Activated naive CD8-positive, alpha-beta T cell treated with anti-CD3 and anti-CD28 coated beads, Interleukin-2, amount 10 ng/mL, durations not matched to agents 7 days and 5 days (primary cell): ENCODE measurements at regions of chr10 and their contacts with region 1.

Region 1: DNA sequence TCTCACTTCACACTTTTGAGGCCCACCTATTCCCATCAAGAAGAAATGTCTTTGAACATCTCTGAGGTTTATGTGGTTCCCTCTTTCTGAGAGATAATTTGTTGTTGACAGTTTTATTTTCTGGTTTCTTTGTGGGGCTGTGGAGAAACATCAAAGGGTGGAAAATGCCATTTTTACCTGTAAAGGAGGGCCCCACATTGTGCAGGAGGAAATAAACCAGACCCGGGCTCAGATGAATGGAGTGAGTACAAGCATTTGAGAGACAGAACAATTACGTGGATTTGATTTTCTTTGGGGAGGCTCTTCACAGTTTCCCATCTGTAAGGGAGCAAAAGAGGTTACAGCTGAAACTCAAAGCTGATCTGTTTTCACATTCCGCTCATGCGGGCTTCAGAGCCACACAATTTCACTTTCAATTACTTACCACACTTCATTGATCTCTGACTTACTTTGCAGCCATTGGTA is 29.8 kb downstream of the ITPRIP start:
- DNase-seq: no peak
- ATAC-seq: peak; percentile 74
- H3K4me3 Mint-ChIP-seq: peak overlapping the region; percentile 78
- H3K27ac Mint-ChIP-seq: peak overlapping the region; percentile 81
- H3K4me1 Mint-ChIP-seq: peaks cover 55% of the 10 kb centered on the region
- H3K27me3 Mint-ChIP-seq: no peaks in the 10 kb centered on the region

Region 2: DNA sequence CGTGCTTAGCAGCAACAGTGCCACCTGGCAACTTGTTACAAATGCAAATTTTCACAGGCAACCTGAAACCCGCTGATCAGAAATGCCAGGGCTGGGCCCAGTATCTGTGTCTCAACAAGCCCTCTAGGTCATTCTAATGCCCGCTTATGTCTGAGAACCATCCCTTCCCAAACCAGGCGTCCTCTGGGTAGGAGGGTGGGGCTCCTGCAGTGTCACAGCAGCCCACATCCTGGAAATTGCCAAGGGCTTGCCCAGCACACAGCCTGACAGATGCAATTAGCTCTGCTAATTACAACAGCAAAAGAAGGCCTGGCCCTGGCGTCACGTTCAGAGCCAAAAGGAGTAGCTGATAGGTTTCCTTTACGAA is 13.9 kb after region 1 on chr10:
- POLR2A ChIA-PET with region 1: interaction called, 19 read pairs
- DNase-seq: peak; percentile 44
- ATAC-seq: peak; percentile 63
- H3K4me3 Mint-ChIP-seq: peak overlapping the region; percentile 65
- H3K27ac Mint-ChIP-seq: peak overlapping the region; percentile 85
- H3K4me1 Mint-ChIP-seq: peaks cover 68% of the 10 kb centered on the region
- H3K27me3 Mint-ChIP-seq: no peaks in the 10 kb centered on the region

Region 3: GRCh38 chr10:104337974-104338735 is 29.7 kb after region 1 on chr10 and contains the start of gene ITPRIP:
- POLR2A ChIA-PET with region 1: interaction called, 40 read pairs
- DNase-seq: peak; percentile 79
- ATAC-seq: peak; percentile 71
- H3K4me3 Mint-ChIP-seq: peak within 1 kb of the TSS; percentile 98
- H3K27ac Mint-ChIP-seq: peak within 1 kb of the TSS; percentile 100
- H3K4me1 Mint-ChIP-seq: peaks cover 39% of the 10 kb centered on the region
- H3K27me3 Mint-ChIP-seq: peaks cover 6% of the 10 kb centered on the region
- total RNA-seq, gene ITPRIP: 24.7 to 25.4 TPM

Region 4: DNA sequence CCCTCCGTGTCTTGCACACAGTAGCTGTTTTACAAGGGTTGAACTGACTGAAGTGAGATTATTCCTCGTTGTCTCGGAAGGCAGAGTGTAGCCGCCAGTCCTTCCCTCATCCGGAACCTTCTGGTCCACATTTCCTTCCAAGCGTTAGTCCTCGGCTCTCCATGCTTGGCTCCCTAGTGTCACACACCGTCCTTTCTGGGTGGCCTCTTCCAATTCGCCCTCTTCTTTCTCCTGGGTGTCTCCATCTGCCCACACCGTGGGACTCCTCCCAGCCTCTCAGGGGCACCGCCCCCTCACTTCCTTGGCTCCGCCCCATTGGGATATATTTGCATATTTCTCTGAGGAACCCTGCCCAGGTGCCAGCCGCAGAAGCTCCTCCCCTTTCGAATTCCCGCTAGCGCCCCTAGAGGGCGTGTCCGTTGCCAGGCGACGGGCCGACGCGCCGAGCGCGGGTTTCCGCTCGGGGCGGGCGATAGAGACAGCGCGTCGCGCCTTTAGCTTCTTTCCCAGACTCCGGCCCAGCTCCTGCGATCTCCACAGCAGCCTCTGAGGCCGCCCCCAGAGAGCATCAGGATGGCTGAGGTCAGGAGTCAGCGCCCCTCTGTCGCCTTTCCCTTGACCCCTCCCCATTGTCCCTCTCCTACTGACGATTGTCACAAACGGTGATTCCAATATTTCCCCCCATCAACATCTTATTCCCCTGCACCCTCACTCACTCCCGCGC is 45.0 kb after region 1 on chr10 and contains the start of gene CFAP58:
- POLR2A ChIA-PET with region 1: interaction called, 11 read pairs
- DNase-seq: peak; percentile 94
- ATAC-seq: peak; percentile 91
- H3K4me3 Mint-ChIP-seq: no peak within 1 kb of the TSS
- H3K27ac Mint-ChIP-seq: peak within 1 kb of the TSS; percentile 27
- H3K4me1 Mint-ChIP-seq: peaks cover 18% of the 10 kb centered on the region
- H3K27me3 Mint-ChIP-seq: no peaks in the 10 kb centered on the region
- total RNA-seq, gene CFAP58: 0.28 to 0.34 TPM